Vagina (tissue), 2 donors: ENCODE measurements at regions of chr1 and their contacts with region 1.

Region 1: DNA sequence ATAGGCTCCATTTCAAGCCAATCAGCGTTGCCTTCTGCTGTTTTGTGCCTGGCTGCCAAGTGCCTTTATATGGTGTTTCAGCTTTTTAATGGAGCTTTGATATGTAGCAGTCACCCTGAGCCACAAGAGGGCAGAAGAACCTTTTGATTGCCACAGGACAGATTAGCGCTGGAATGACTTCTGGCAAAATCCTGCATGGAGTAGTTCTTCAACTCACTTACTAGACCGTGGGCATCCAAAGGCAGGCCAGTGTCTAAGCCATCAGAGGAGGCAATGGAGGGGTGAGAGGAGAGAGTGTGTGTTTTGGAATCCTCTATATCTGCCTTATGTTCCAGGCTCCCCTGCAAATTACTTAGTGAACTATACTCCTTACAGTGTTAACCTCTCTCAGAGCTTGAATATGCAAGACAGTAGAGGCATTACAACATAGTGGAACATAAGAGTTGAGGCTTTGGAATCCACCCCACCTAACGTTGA is 56.2 kb downstream of the ST3GAL3 start:
- DNase-seq: no peak
- H3K4me3 ChIP-seq: no peak overlapping the region
- H3K27ac ChIP-seq: no peak overlapping the region
- H3K4me1 ChIP-seq: peaks cover 13% of the 10 kb centered on the region
- H3K27me3 ChIP-seq: no peaks in the 10 kb centered on the region
- CTCF ChIP-seq: peak; percentile 87 to 93 (median 92)
- POLR2A ChIP-seq: no peak

Region 2: DNA sequence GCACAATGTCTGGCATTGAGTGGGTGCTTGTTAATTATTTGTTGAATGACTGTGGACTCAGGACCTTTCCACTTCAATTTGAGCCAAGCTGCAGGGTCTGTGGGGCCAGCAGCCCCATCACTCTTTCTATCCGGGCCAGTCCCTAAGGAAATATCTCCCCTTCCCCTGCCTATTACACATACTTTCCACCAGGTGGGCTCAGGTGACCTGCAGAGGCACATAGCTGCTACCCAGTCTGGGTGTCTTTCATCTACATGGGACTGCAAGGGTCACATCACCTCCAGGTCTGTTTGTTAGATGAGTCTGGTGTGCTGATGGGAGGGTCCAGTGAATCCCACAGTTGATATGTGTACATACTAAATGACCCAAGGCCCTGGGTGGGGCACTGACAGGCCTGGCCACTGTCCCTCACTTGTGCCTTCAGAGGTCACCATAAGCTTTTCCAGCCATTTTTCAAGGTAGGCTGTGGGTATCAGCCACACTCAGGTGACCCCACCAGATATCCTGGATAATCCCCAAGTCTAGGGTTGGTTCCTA is 173.1 kb before region 1 on chr1:
- intact Hi-C with region 1: no loop called
- DNase-seq: no peak
- H3K4me3 ChIP-seq: no peak overlapping the region
- H3K27ac ChIP-seq: no peak overlapping the region
- H3K4me1 ChIP-seq: peaks cover 9% of the 10 kb centered on the region
- H3K27me3 ChIP-seq: no peaks in the 10 kb centered on the region
- CTCF ChIP-seq: no peak
- POLR2A ChIP-seq: no peak

Region 3: GRCh38 chr1:43934101-43934985 is 170.8 kb after region 1 on chr1:
- intact Hi-C with region 1: loop called (anchors 5 kb)
- DNase-seq: no peak
- H3K4me3 ChIP-seq: peak overlapping the region; percentile 38 to 50
- H3K27ac ChIP-seq: peak overlapping the region; percentile 11
- H3K4me1 ChIP-seq: peaks cover 66% of the 10 kb centered on the region
- H3K27me3 ChIP-seq: no peaks in the 10 kb centered on the region
- CTCF ChIP-seq: peak; percentile 51 to 91 (median 78)
- POLR2A ChIP-seq: no peak